ENCODE measurements at regions of chr19 and their contacts with region 1.

Region 1: DNA sequence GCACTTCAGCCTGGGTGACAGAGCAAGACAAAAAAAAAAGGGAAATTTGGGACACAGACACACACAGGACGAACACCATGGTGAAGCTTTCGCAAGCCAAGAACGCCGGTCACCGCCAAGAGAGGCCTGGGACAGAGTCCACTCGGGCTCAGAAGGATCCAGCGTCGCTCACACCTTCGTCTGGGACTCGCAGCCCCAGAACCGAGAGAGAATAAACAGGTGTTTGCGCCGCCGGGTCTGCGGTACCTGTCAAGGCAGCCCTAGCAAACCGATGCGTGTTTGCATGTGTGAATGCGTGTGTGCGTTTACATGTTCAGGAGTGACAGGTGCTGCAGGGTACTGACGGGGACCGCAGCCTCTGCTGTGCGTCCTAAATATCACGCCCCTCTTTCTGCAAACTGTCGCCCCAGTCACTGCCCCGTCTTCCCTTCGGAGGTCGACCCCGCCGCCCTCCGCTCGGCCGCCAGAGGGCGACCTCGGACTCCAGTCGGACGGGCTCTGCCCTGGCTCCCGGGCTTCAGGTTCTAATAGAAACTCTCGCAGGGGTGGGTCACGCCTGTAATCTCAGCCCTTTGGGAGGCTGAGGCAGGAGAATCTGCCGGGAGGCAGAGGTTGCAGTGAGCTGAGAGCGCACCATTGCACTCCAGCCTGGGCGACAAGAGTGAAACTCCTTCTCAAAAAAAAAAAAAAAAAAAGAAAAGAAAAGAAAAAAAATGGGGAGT is 11.8 kb upstream of the CSNK1G2 start:
- DNase-seq: peak in 1 of 2 experiments; percentile 95
- H3K4me3 ChIP-seq: peak overlapping the region in 3 of 4 experiments; percentile 20 to 52 (median 36); a peak in 5 of 8 replicates
- H3K27ac ChIP-seq: no peak overlapping the region
- H3K4me1 ChIP-seq: peaks cover 0 to 8% (median 4%) of the 10 kb centered on the region in 4 experiments; a peak in 4 of 7 replicates
- H3K27me3 ChIP-seq: no peaks in the 10 kb centered on the region; a peak in 1 of 7 replicates
- CTCF ChIP-seq: peak; percentile 83 to 89 (median 89)
- EP300 ChIP-seq: no peak
- POLR2A ChIP-seq: no peak
- RAD21 ChIP-seq: peak; percentile 72 to 84

Region 2: DNA sequence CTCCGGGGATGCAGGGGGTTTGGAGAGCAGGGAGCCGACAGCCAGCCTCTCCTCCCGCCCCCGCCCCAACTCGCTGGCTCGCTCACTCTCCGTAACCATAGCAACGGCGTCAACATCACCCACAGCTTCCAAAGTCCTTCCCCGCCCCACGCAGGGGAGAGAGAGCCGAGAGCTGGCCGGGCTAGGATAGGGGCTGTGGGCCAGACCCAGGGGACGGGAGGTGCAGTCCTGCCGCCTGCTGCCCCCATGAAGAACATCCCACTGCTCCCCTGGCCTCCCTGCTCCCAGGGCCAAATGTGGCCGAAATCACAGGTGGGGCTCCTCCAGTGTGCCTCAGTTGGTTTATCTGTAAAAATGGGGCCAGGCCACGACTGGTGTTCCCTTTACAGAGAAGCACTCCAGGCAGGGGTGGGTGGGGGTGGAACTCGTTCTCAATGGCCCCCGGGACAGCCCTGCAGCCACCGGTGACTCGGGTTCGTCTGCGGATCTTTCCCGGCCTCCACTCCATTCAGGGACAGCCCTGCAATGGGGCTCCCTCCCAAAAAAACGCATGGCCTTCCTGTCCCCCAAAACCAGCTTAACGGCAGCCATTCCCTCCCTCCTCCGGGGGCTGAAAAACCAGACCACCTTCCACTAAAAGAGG is 68.9 kb before region 1 on chr19:
- CTCF ChIA-PET with region 1: no interaction called
- POLR2A ChIA-PET with region 1: no interaction called
- DNase-seq: peak in 1 of 2 experiments; percentile 61
- H3K4me3 ChIP-seq: peak overlapping the region in 3 of 4 experiments; percentile 72 to 84 (median 81); a peak in 5 of 8 replicates
- H3K27ac ChIP-seq: no peak overlapping the region
- H3K4me1 ChIP-seq: peaks cover 0 to 59% (median 48%) of the 10 kb centered on the region in 4 experiments; a peak in 6 of 7 replicates
- H3K27me3 ChIP-seq: peaks cover 0 to 15% (median 6%) of the 10 kb centered on the region in 4 experiments; a peak in 5 of 7 replicates
- CTCF ChIP-seq: no peak
- EP300 ChIP-seq: no peak
- POLR2A ChIP-seq: no peak
- RAD21 ChIP-seq: no peak

Region 3: DNA sequence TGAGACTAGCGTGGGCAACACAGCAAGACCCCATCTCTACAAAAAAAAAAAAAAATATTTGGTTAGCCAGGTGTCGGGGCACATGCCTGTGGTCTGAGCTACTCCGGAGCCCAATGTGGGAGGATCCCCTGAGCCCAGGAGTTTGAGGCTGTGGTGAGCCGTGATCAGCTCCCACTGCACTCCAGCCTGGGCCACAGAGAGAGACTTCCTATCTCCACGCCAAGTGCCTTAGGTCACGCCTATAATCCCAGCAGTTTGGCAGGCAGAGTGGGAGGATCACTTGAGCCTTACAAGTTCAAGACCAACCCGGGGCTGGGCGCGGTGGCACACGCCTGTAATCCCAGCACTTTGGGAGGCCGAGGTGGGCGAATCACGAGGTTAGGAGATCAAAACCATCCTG is 32.7 kb before region 1 on chr19:
- CTCF ChIA-PET with region 1: interaction called, 40 read pairs
- POLR2A ChIA-PET with region 1: interaction called, 10 read pairs
- DNase-seq: no peak
- H3K4me3 ChIP-seq: no peak overlapping the region
- H3K27ac ChIP-seq: no peak overlapping the region
- H3K4me1 ChIP-seq: no peaks in the 10 kb centered on the region; a peak in 1 of 7 replicates
- H3K27me3 ChIP-seq: no peaks in the 10 kb centered on the region; a peak in 1 of 7 replicates
- CTCF ChIP-seq: no peak
- EP300 ChIP-seq: no peak
- POLR2A ChIP-seq: no peak
- RAD21 ChIP-seq: no peak

Region 4: DNA sequence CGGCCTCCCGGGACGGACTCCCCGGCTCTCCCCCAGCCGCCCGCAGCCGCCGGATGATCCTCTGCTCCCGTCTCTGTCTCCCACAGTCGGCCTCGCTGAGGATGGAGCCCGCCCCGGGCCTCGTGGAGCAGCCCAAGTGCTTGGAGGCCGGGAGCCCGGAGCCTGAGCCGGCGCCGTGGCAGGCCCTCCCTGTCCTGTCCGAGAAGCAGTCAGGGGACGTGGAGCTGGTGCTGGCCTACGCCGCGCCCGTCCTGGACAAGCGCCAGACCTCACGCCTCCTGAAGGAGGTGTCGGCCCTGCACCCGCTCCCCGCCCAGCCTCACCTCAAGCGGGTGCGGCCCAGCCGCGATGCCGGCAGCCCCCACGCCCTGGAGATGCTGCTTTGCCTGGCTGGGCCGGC is 17.2 kb before region 1 on chr19:
- CTCF ChIA-PET with region 1: interaction called, 10 read pairs
- POLR2A ChIA-PET with region 1: interaction called, 13 read pairs
- DNase-seq: no peak
- H3K4me3 ChIP-seq: no peak overlapping the region
- H3K27ac ChIP-seq: no peak overlapping the region
- H3K4me1 ChIP-seq: no peaks in the 10 kb centered on the region; a peak in 3 of 7 replicates
- H3K27me3 ChIP-seq: no peaks in the 10 kb centered on the region
- CTCF ChIP-seq: no peak
- EP300 ChIP-seq: no peak
- POLR2A ChIP-seq: no peak
- RAD21 ChIP-seq: no peak

Region 5: GRCh38 chr19:1956868-1957492 is 27.8 kb after region 1 on chr19:
- CTCF ChIA-PET with region 1: interaction called, 10 read pairs
- POLR2A ChIA-PET with region 1: interaction called, 3 read pairs
- DNase-seq: peak in 1 of 2 experiments; percentile 81
- H3K4me3 ChIP-seq: no peak overlapping the region
- H3K27ac ChIP-seq: no peak overlapping the region
- H3K4me1 ChIP-seq: peaks cover 0 to 14% (median 9%) of the 10 kb centered on the region in 4 experiments; a peak in 5 of 7 replicates
- H3K27me3 ChIP-seq: no peaks in the 10 kb centered on the region
- CTCF ChIP-seq: peak; percentile 47 to 80 (median 68)
- EP300 ChIP-seq: no peak
- POLR2A ChIP-seq: no peak
- RAD21 ChIP-seq: peak; percentile 29 to 40; a peak in 3 of 4 replicates

Measured in H1 (cell line).